CD4-positive, alpha-beta T cell (primary cell): ENCODE measurements at regions of chr19 and their contacts with region 1.

Region 1: DNA sequence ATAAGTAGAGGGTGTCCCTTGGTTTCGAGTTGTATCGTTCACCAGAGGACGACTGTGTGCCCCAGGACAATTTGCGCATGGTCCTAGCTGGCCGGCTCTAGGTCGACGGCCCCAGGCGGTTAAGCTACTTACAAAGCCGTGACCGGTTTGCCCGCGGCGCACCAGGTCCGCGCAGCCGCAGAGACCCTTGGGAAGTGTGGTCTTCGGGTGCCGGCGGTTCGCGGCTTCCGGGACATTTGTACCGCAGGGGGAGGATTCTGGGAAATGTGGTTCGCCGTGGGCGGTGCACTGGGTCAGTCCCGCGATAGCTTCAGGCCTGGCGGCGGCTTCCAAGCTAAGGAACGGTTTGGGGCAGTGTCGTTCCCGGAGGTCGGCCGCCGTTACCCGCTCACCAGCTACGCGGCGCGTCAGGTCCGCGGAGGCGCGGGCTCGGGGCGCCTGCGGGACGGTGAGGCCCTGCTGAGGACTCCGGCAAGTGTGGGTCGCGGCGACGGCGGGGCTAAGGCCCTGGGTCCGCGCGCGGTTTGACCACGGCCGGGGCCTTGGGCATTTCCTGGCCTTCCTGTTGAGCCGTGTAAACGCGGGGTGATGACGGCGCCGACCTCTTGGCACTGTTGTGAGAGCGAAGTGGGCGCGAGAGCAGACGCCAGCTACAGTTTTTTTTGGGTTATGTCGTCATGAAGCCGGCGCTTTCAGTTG is at the start of gene ZNF302:
- DNase-seq: peak; percentile 87 to 97 (median 92)
- ATAC-seq: peak; percentile 86
- H3K4me3 ChIP-seq: peak within 1 kb of the TSS; percentile 60
- H3K4me3 Mint-ChIP-seq: peak within 1 kb of the TSS; percentile 99
- H3K27ac ChIP-seq: peak within 1 kb of the TSS; percentile 85 to 88
- H3K27ac Mint-ChIP-seq: peak within 1 kb of the TSS; percentile 99
- H3K4me1 ChIP-seq: peaks cover 23% of the 10 kb centered on the region
- H3K4me1 Mint-ChIP-seq: peaks cover 35% of the 10 kb centered on the region
- H3K27me3 ChIP-seq: no peaks in the 10 kb centered on the region
- H3K27me3 Mint-ChIP-seq: peaks cover 22% of the 10 kb centered on the region
- CTCF ChIP-seq: no peak
- total RNA-seq, gene ZNF302: 12.2 to 12.9 TPM

Region 2: DNA sequence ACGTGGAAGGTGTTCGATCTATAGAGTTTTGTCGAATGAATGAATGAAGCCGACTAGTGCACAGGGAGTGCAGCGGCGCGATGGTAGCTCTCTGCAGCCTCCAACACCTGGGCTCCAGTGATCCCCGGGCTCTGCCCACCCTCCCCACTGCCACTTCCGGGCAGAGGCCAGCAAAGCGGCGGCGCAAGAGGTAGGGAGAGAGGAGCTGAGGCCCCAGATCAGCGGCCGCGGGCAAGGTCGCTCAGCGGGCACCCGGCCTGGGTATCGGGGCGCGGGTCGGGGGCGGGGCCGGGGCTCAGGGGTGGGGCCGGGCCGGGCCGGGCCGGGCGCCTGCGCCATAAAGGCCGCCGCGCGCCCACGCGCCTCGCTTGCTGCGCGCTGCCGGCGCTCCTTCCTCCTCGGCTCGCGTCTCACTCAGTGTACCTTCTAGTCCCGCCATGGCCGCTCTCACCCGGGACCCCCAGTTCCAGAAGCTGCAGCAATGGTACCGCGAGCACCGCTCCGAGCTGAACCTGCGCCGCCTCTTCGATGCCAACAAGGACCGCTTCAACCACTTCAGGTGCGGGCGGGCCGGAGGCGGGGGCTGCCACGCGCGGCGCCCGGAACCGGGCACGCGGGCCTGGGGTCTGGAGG is 312.6 kb before region 1 on chr19 and contains the start of gene GPI:
- CTCF ChIA-PET with region 1: no interaction called
- POLR2A ChIA-PET with region 1: no interaction called
- intact Hi-C with region 1: loop called in 1 of 2 experiments (anchors 10 kb)
- DNase-seq: peak; percentile 32 to 85 (median 60)
- ATAC-seq: peak; percentile 94
- H3K4me3 ChIP-seq: peak within 1 kb of the TSS; percentile 95
- H3K4me3 Mint-ChIP-seq: peak within 1 kb of the TSS; percentile 99
- H3K27ac ChIP-seq: peak within 1 kb of the TSS in 1 of 2 donors; percentile 59
- H3K27ac Mint-ChIP-seq: peak within 1 kb of the TSS; percentile 87
- H3K4me1 ChIP-seq: peaks cover 37% of the 10 kb centered on the region
- H3K4me1 Mint-ChIP-seq: peaks cover 41% of the 10 kb centered on the region
- H3K27me3 ChIP-seq: no peaks in the 10 kb centered on the region
- H3K27me3 Mint-ChIP-seq: no peaks in the 10 kb centered on the region
- CTCF ChIP-seq: no peak
- total RNA-seq, gene GPI: 85.0 to 86.0 TPM

Region 3: GRCh38 chr19:34639491-34640085 is 37.9 kb before region 1 on chr19:
- CTCF ChIA-PET with region 1: interaction called, 3 read pairs
- POLR2A ChIA-PET with region 1: no interaction called
- intact Hi-C with region 1: loop called in 1 of 2 experiments (anchors 5 kb)
- DNase-seq: peak; percentile 8 to 89 (median 52)
- ATAC-seq: peak; percentile 48
- H3K4me3 ChIP-seq: no peak overlapping the region
- H3K4me3 Mint-ChIP-seq: no peak overlapping the region
- H3K27ac ChIP-seq: no peak overlapping the region
- H3K27ac Mint-ChIP-seq: no peak overlapping the region
- H3K4me1 ChIP-seq: no peaks in the 10 kb centered on the region
- H3K4me1 Mint-ChIP-seq: no peaks in the 10 kb centered on the region
- H3K27me3 ChIP-seq: no peaks in the 10 kb centered on the region
- H3K27me3 Mint-ChIP-seq: no peaks in the 10 kb centered on the region
- CTCF ChIP-seq: peak; percentile 81

Region 4: DNA sequence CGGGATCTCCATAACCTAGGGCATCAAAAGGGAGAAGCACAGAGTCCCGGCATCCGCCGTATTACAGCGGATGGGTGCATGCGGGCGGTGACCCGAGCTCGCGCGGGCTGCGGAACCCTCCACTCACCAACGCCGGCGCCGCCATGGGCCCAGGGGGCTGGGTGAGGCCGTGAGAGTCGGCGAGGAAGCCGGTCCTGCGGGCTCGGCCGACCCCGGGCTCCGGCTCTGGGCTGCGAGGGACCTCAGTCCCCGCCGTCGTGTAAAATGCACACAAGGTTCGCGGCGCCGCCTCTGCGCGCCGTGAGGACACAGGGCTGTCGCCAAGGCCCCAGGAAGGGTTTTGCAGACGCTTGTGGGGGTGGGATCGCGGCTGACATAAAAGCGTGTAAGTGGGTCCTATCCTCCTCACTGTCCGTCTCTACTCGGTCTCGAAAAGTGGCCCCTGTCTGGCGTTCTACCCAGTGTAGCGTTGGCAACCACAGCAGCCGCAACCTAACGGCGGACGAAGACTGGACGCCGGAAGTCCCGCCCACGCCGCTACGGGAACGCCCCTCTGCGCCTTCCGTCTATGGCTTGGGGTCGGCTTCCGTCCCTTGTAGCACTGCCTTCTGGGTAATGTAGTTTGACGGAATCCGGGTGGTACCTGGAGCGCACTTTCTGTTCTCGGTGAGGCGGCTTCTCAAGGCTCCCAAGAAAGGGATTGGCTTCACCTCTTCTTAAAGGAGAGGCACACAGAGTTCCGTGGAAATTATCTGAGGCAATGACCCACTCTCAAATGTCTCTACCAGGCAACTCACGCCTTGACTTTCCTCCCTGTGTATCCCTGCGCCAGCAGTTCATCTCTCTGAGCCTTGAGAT is 95.4 kb after region 1 on chr19 and contains the start of gene ZNF599:
- CTCF ChIA-PET with region 1: no interaction called
- POLR2A ChIA-PET with region 1: interaction called, 13 read pairs
- intact Hi-C with region 1: loop called (anchors 1 to 2 kb)
- DNase-seq: peak; percentile 80 to 96 (median 88)
- ATAC-seq: peak; percentile 94
- H3K4me3 ChIP-seq: peak within 1 kb of the TSS; percentile 90
- H3K4me3 Mint-ChIP-seq: peak within 1 kb of the TSS; percentile 99
- H3K27ac ChIP-seq: peak within 1 kb of the TSS; percentile 43 to 74
- H3K27ac Mint-ChIP-seq: peak within 1 kb of the TSS; percentile 93
- H3K4me1 ChIP-seq: peaks cover 16% of the 10 kb centered on the region
- H3K4me1 Mint-ChIP-seq: peaks cover 20% of the 10 kb centered on the region
- H3K27me3 ChIP-seq: no peaks in the 10 kb centered on the region
- H3K27me3 Mint-ChIP-seq: peaks cover 14% of the 10 kb centered on the region
- CTCF ChIP-seq: no peak
- total RNA-seq, gene ZNF599: 2.0 to 2.9 TPM